ENCODE measurements at regions of chr7 and their contacts with region 1.

Region 1: GRCh38 chr7:100691676-100692577 is 2.1 kb downstream of the GIGYF1 start:
- DNase-seq: peak; percentile 82
- H3K4me3 ChIP-seq: peak overlapping the region in 1 of 4 donors; percentile 100
- H3K27ac ChIP-seq: peak overlapping the region; percentile 37 to 91 (median 89)
- H3K4me1 ChIP-seq: peaks cover 21 to 47% (median 33%) of the 10 kb centered on the region in 4 donors
- H3K27me3 ChIP-seq: peaks cover 14% of the 10 kb centered on the region
- CTCF ChIP-seq: peak; percentile 86 to 95 (median 93)
- EP300 ChIP-seq: no peak
- POLR2A ChIP-seq: no peak

Region 2: DNA sequence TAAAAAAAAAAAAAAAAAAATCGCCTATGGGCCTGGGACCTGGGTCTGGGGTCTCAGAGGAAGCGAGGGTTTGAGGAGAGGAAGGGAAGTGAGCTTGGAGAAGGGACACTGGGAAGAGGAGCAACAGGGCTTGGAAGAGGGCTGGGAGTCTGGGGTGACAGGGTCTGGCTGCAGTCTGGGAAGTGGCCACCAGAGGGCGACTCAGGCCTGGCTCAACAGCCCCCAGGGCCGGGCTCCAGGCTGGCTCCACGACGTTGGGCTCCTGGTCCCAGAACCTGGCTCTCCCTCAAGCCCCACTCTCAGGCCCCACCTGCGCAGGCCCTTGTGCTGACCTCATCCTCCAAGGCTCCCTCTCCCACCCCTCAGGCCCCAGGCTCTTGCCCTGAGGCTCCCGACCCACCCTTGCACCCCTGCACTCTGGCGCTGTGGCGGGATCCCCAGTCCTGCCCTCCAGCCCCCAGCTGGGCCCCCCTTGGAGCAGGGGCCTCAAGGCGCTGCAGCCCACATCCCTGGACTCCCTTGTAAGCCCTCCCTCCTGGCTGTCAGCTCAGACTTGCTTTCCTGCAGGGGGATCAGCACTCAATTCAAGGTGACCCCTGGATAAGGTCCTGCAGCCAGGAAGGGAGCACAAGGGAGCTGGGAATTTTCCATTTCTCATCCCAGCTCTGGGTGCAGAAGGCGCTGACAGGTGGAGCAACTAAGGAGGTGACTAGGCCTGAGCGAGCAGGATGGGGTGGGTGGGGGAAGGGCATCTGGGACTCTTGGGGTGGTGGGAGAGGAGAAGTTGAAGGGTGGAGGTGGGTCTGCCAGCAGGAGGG is 222.5 kb before region 1 on chr7:
- in situ Hi-C with region 1: loop called in 3 of 4 experiments (anchors 10 to 25 kb)
- intact Hi-C with region 1: no loop called
- DNase-seq: peak; percentile 91
- H3K4me3 ChIP-seq: no peak overlapping the region
- H3K27ac ChIP-seq: peak overlapping the region in 3 of 4 donors; percentile 34 to 62 (median 49)
- H3K4me1 ChIP-seq: peaks cover 19 to 49% (median 28%) of the 10 kb centered on the region in 4 donors
- H3K27me3 ChIP-seq: no peaks in the 10 kb centered on the region
- CTCF ChIP-seq: peak; percentile 94 to 98 (median 95)
- EP300 ChIP-seq: no peak
- POLR2A ChIP-seq: no peak

Region 3: DNA sequence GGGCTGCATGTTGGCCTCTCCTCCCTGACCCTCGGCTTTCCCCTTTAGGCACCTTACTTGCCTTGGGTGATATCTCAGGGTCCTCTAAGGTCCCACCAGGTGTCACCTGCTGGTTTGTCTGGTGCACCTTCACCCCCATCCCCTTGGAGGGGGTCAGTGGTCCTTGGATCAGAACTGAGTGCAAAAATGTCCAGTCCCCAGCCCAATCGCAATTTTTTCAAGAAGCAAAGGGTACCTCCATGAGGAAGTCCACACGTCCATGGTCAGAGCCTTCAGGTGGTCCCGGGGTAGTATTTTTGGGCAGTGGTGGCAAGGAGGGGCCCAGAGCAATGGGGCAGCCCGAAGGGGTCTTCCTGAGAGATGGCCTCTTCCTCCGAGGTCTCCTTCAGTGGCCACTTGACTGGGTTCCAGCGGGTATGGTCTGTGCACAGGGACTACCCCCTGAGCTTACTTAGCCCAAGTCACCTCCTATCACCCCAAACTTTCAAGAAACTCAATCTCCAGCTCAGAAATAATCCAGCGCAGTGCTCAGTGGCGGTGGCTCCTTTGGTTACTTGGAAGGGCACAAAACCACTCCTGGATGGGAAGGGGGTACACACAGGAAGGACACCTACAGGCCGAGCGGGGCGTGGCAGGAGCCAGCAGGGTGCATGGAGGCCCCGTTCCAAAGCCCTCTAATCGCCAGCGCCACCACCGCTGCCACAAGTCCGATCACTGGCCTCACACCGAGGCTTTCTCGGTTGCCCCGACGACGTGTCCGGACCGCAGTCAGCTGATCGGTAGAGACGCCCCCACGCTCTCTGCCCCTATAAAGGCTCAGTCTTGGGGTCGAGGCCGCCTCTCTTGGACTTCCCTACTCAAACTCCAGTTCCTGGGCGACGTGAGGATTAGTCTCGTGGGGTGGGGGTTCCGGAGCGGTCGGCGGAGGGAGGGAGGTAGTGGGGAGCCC is 122.8 kb before region 1 on chr7:
- in situ Hi-C with region 1: no loop called
- intact Hi-C with region 1: loop called (anchors 5 kb)
- DNase-seq: peak; percentile 74
- H3K4me3 ChIP-seq: peak overlapping the region in 2 of 4 donors; percentile 37 to 38
- H3K27ac ChIP-seq: peak overlapping the region; percentile 38 to 58 (median 44)
- H3K4me1 ChIP-seq: peaks cover 12 to 35% (median 27%) of the 10 kb centered on the region in 4 donors
- H3K27me3 ChIP-seq: peaks cover 8% of the 10 kb centered on the region
- CTCF ChIP-seq: peak; percentile 39 to 52 (median 43)
- EP300 ChIP-seq: no peak
- POLR2A ChIP-seq: no peak

Region 4: GRCh38 chr7:100586266-100587025 is 105.5 kb before region 1 on chr7 and contains the start of gene FBXO24:
- in situ Hi-C with region 1: loop called in 1 of 4 experiments (anchors 25 kb)
- intact Hi-C with region 1: no loop called
- DNase-seq: peak; percentile 100
- H3K4me3 ChIP-seq: peak within 1 kb of the TSS; percentile 82 to 100 (median 96)
- H3K27ac ChIP-seq: peak within 1 kb of the TSS; percentile 97 to 99 (median 98)
- H3K4me1 ChIP-seq: peaks cover 9 to 40% (median 33%) of the 10 kb centered on the region in 4 donors
- H3K27me3 ChIP-seq: no peaks in the 10 kb centered on the region
- CTCF ChIP-seq: no peak
- EP300 ChIP-seq: no peak
- POLR2A ChIP-seq: no peak
- total RNA-seq, gene FBXO24: 0.14 to 0.79 TPM in 2 of 4 donors, not detected in the others